PC-3 (cell line): ENCODE measurements at regions of chr4 and their contacts with region 1.

Region 1: GRCh38 chr4:173125235-173125812 is 43.3 kb upstream of the GALNT7 start:
- DNase-seq: no peak
- ATAC-seq: no peak
- H3K4me3 ChIP-seq: no peak overlapping the region
- H3K27ac ChIP-seq: no peak overlapping the region
- H3K4me1 ChIP-seq: no peaks in the 10 kb centered on the region
- H3K27me3 ChIP-seq: no peaks in the 10 kb centered on the region
- CTCF ChIP-seq: no peak

Region 2: DNA sequence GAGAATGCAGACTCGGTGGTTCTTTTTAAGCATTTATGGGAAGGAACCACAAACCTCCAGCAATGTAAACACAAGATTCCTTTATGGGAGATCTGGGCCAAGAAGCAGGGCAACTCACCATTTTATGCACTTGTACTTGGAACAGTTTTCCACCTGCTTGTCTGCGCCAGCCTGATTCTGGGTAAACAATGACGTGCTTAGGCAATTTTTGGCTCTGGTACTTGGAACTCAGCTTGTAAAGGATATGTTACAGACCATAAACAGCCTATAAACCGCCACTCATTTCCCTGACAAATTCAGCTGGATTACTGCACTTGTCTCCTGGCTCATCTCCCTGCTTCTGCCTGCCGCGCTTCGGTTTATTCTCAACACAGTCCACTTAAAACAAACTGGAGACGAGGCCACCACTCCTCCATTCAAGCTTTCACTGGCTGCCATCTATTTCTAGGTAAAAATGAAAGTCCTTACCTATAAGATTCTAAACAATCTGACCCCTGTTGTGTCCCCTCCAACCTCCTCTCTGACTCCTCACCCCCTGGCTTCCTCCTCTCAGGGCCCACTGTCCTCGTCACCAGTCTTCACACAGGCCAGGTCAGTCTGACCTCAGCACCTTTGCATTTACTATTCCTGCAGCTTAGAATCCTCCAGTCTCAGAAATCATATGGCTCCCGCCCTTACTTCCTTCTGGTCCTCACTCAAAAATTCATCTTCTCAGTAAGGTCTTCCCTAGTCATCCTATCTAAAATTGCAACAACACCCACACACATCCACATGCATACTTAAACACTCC is 162.6 kb before region 1 on chr4:
- CTCF ChIA-PET with region 1: no interaction called
- POLR2A ChIA-PET with region 1: no interaction called
- intact Hi-C with region 1: no loop called
- DNase-seq: peak; percentile 93
- ATAC-seq: peak; percentile 98
- H3K4me3 ChIP-seq: no peak overlapping the region
- H3K27ac ChIP-seq: 0 out of 2 replicates have a peak overlapping the region, but pooled peaks have one; percentile 14
- H3K4me1 ChIP-seq: peaks cover 13% of the 10 kb centered on the region
- H3K27me3 ChIP-seq: peaks cover 19% of the 10 kb centered on the region
- CTCF ChIP-seq: no peak

Region 3: DNA sequence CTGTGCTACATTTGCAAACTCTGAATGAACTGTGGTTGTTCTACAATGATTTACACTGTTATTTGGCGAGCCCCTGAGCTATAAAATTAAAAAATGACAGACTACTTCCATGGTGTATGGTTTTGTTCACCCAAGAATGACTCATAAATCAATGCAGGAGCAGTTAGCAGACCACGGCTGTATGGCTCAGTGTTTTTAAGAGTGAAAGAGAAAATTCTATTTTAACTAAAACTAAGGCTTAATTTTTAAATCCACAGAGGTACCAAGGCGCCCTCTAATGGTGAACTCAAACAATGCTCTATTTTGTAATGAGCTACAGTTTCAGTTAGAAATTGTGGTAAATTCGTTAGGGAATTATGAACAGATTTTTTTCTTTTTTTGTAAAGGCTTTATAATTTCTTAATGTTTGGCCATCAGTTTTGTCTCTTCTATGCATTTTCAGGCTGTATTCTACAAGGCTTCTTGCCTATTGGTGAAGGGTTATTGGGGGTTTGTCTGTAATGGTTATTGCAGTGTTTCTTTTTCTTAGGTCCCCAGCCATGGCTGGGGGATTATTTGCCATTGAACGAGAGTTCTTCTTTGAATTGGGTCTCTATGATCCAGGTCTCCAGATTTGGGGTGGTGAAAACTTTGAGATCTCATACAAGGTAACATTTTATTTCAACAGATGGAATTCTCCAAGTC is 176.3 kb after region 1 on chr4:
- CTCF ChIA-PET with region 1: interaction called, 10 read pairs
- POLR2A ChIA-PET with region 1: no interaction called
- intact Hi-C with region 1: no loop called
- DNase-seq: peak; percentile 52
- ATAC-seq: peak; percentile 68
- H3K4me3 ChIP-seq: no peak overlapping the region
- H3K27ac ChIP-seq: no peak overlapping the region
- H3K4me1 ChIP-seq: peaks cover 4% of the 10 kb centered on the region; the same call in 1 of the 2 replicates
- H3K27me3 ChIP-seq: no peaks in the 10 kb centered on the region
- CTCF ChIP-seq: peak; percentile 78